Head of caudate nucleus (tissue), 42 donors: ENCODE measurements at regions of chr7 and their contacts with region 1.

Region 1: GRCh38 chr7:67484244-67484751 is 487.7 kb downstream of the TYW1 start:
- DNase-seq: peak; percentile 32 to 86 (median 66)

Region 2: GRCh38 chr7:67100956-67101361 is 383.3 kb before region 1 on chr7:
- intact Hi-C with region 1: no loop called
- DNase-seq: no peak

Region 3: DNA sequence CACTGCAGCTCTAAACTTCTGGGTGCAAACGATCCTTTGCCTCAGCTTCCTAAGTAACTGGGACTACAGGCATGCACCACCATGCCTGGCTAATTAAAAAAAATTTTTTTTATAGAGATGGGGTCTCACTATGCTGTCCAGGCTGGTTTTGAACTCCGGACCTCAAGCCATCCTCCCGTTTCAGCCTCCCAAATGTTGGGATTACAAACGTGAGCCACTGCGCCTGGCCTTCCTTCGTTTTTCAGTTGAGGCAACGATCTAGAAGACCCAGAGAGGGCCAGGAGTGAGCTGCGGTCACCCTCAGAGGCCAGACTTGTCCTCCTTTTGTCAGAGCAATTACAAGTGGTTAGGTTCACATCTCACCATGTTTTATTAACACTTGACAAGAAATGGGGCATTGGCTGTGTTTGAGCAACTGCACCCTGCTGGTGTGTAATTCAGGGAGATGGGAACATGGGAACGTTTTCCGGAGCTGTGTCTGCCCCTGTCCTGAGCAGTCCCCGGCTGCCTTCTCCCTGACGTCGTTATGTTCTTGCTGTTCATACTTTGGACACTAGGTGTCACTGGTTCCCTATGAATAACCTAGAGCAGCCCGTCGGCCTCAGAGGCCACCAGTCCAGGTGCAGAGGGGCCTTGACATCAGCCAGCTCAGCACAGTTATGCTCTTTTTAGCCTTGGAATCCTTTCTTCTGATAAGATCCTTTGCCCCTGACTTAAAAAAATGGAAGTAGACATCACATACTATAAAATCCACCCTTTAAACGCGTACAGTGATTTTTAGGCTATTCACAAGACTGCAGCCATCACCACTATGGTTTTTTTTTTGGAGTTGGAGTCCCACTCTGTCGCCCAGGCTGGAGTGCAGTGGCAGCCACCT is 112.6 kb before region 1 on chr7:
- intact Hi-C with region 1: loop called (anchors 10 kb)
- DNase-seq: peak; percentile 12 to 85 (median 54)

Region 4: GRCh38 chr7:67447913-67448670 is 36.2 kb before region 1 on chr7:
- intact Hi-C with region 1: no loop called
- DNase-seq: no peak